CD4-positive, alpha-beta memory T cell (primary cell): ENCODE measurements at regions of chr5 and their contacts with region 1.

Region 1: GRCh38 chr5:96876292-96876850 is at the start of gene ERAP2:
- DNase-seq: peak; percentile 49 to 69 (median 65)
- H3K4me3 ChIP-seq: peak within 1 kb of the TSS; percentile 79 to 92
- H3K4me3 Mint-ChIP-seq: peak within 1 kb of the TSS; percentile 90 to 99 (median 96)
- H3K27ac ChIP-seq: peak within 1 kb of the TSS; percentile 79
- H3K27ac Mint-ChIP-seq: peak within 1 kb of the TSS; percentile 89 to 99 (median 97)
- H3K4me1 ChIP-seq: peaks cover 61% of the 10 kb centered on the region
- H3K4me1 Mint-ChIP-seq: peaks cover 45 to 80% (median 49%) of the 10 kb centered on the region in 4 donors
- H3K27me3 ChIP-seq: no peaks in the 10 kb centered on the region
- H3K27me3 Mint-ChIP-seq: no peaks in the 10 kb centered on the region
- total RNA-seq, gene ERAP2: 107 to 112 TPM

Region 2: GRCh38 chr5:96816411-96816939 is 59.9 kb before region 1 on chr5:
- CTCF ChIA-PET with region 1: no interaction called
- POLR2A ChIA-PET with region 1: interaction called, 22 read pairs
- intact Hi-C with region 1: loop called (anchors 2 kb)
- DNase-seq: peak; percentile 85 to 92 (median 89)
- H3K4me3 ChIP-seq: peak overlapping the region; percentile 24 to 64
- H3K4me3 Mint-ChIP-seq: peak overlapping the region; percentile 80 to 96 (median 90)
- H3K27ac ChIP-seq: peak overlapping the region; percentile 76
- H3K27ac Mint-ChIP-seq: peak overlapping the region; percentile 88 to 99 (median 97)
- H3K4me1 ChIP-seq: peaks cover 56% of the 10 kb centered on the region
- H3K4me1 Mint-ChIP-seq: peaks cover 51 to 76% (median 64%) of the 10 kb centered on the region in 4 donors
- H3K27me3 ChIP-seq: no peaks in the 10 kb centered on the region
- H3K27me3 Mint-ChIP-seq: no peaks in the 10 kb centered on the region

Region 3: DNA sequence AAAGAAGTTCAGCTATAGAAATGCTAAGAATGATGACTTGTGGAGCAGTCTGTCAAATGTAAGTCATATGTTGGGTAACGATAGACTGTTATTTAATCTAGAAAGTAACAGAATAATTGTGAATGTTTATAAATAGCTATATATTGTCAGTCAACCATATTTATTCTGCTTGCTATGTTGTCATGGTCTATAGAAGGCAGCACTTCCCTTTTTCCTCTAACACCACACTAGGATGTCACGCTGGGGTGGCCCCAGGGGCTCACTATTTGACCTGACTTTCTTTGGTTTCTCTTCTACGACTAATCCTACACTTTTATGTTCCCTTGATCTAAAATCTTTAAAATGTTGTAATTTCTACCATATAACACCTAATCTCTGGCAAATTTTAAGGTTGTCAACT is 20.4 kb after region 1 on chr5:
- CTCF ChIA-PET with region 1: interaction called, 5 read pairs
- POLR2A ChIA-PET with region 1: interaction called, 15 read pairs
- intact Hi-C with region 1: no loop called
- DNase-seq: no peak
- H3K4me3 ChIP-seq: no peak overlapping the region
- H3K4me3 Mint-ChIP-seq: peak overlapping the region; percentile 56 to 90 (median 80)
- H3K27ac ChIP-seq: peak overlapping the region; percentile 56
- H3K27ac Mint-ChIP-seq: peak overlapping the region; percentile 82 to 97 (median 92)
- H3K4me1 ChIP-seq: peaks cover 37% of the 10 kb centered on the region
- H3K4me1 Mint-ChIP-seq: peaks cover 26 to 55% (median 42%) of the 10 kb centered on the region in 4 donors
- H3K27me3 ChIP-seq: no peaks in the 10 kb centered on the region
- H3K27me3 Mint-ChIP-seq: no peaks in the 10 kb centered on the region